ENCODE measurements at regions of chr7 and their contacts with region 1.

Region 1: DNA sequence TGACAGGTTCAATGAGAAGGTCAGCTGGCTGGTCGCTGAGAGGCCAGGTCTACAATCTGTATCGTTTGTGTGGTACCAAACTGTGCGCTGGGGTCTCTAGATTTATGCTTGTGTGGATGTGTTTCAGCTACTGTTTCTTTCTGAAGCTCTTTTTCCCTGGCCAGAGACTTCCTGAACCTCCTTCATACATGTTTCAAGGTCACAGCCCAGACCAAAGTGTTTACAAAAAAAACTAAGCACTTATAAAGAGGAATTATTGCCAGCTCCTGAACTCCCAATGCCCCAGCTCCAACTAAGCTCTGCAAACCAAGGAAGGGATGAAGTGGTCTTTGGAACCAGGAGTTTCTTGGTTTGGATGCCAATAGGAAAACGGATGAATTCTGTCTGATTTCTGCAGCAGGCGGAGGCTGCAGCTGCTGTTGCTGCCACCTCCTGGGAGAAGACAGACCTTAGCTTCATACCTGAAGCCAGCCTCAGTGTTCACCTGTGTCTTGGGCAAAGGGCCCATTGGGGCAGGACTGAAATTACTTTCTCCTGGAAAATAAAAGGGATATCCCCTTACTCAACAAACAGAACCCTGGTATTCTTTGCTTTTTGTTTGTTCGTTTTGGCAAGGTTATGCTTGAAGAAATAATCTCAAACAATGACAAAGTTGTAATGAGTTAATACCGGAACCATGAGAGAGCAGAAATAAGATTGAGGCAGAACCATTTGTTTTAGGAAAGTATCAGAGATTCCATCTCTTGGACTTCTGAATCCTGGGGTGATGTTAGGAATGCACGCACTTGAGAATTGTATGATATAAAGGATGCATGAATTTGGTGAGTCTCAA is 24.6 kb upstream of the MKLN1 start:
- DNase-seq: peak in 8 of 10 donors; percentile 16 to 59 (median 46)
- H3K4me3 ChIP-seq: no peak overlapping the region
- H3K27ac ChIP-seq: peak overlapping the region in 47 of 59 donors; percentile 2 to 78 (median 40)
- H3K27me3 ChIP-seq: no peaks in the 10 kb centered on the region
- CTCF ChIP-seq: peak in 55 of 56 donors; percentile 37 to 73 (median 60)

Region 2: DNA sequence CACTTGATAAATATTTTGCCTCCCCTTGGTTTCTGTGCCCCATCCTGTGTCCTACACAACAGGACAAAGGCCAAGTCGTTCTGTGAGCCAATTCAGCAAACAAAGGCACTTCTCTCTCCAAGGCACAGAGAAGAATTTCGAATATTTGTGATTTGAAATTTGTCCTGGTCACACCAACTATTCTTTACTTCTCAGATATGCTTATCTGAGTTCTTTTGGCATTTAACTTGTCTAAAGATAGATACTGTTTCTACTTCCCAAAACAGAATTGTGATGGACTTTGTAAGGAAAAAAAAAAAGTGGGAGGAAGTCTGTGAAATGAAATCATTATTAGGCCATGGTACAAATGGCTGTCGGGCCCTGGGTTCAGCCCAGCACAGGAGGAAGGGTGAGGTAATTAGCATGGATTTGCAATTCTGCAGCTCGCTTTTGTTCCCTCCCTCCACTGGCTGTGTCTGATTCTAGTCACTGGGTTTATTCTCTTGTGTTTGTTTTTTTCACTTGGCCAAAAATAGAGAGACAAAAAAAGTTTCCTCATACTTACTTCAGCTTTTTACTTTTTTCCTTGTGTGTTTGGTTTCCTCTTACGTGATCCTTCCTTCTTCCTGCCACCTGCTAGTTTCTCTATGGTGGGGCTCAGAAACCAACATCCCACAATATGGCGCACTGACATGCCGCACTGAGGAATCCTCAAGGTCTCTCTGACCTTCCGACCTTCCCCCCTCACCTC is 83.6 kb before region 1 on chr7:
- intact Hi-C with region 1: loop called in 1 of 2 experiments (anchors 5 kb)
- DNase-seq: peak; percentile 24 to 80 (median 64)
- H3K4me3 ChIP-seq: peak overlapping the region in 32 of 59 donors; percentile 0 to 44 (median 19)
- H3K27ac ChIP-seq: peak overlapping the region; percentile 40 to 94 (median 85)
- H3K27me3 ChIP-seq: no peaks in the 10 kb centered on the region
- CTCF ChIP-seq: peak in 12 of 56 donors; percentile 2 to 28 (median 10)

Measured in dorsolateral prefrontal cortex (tissue), 120 donors.